ENCODE measurements at regions of chr2 and their contacts with region 1.

Region 1: DNA sequence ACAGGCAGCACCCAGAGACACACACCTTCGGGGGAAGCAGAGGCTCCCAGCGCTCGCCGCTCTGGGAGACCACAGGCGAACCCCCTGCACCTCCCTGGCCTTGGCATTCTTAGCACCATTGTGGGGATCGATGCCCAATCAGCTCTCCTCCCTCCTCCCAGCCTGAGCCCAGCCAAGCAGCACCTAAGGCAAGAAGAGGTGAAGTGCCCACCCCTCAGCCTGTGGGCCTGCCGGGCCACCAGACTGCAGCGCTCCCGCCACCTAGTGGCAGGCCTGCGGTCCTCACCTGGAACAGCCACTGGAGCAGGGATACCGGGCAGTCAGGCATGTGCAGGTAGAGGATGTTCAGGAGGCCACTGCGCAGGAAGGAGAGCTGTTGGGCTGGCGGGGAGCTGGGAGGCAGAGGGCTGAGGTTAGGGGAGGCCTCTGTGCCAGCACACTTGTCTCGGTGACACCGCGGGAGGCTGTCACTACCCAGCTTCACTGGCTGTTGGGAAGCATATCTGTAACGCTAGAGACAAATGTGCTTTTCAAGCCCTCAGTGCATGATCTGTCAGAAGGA is 35.2 kb downstream of the FAM178B start:
- DNase-seq: peak; percentile 91
- ATAC-seq: peak; percentile 96
- H3K4me3 Mint-ChIP-seq: no peak overlapping the region
- H3K27ac Mint-ChIP-seq: no peak overlapping the region
- H3K4me1 Mint-ChIP-seq: peaks cover 11% of the 10 kb centered on the region
- H3K27me3 Mint-ChIP-seq: peaks cover 3% of the 10 kb centered on the region; the same call in 1 of the 2 replicates
- CTCF ChIP-seq: peak; percentile 93

Region 2: DNA sequence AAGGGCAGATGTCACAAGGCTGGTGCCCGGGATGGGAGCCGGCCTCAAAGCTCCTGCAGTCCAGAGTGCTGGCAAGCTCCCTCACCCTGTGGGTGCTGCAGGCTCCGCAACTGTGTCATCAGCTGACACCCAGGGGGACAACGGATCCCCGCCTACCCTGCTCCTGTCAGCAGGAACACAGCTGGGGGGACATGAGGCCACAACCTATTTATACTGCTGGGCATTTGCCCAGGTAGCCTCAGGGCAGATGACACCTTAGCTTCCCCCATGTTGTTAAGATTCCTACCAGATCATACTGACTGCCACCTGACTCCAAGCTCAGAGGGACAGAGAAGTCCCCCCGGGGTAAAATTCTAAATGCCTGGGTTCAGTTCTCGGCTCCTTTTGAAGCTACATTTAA is 108.6 kb before region 1 on chr2:
- CTCF ChIA-PET with region 1: interaction called, 10 read pairs
- POLR2A ChIA-PET with region 1: no interaction called
- DNase-seq: no peak
- ATAC-seq: no peak
- H3K4me3 Mint-ChIP-seq: no peak overlapping the region
- H3K27ac Mint-ChIP-seq: no peak overlapping the region
- H3K4me1 Mint-ChIP-seq: peaks cover 5% of the 10 kb centered on the region; the same call in 1 of the 2 replicates
- H3K27me3 Mint-ChIP-seq: no peaks in the 10 kb centered on the region
- CTCF ChIP-seq: no peak

Region 3: DNA sequence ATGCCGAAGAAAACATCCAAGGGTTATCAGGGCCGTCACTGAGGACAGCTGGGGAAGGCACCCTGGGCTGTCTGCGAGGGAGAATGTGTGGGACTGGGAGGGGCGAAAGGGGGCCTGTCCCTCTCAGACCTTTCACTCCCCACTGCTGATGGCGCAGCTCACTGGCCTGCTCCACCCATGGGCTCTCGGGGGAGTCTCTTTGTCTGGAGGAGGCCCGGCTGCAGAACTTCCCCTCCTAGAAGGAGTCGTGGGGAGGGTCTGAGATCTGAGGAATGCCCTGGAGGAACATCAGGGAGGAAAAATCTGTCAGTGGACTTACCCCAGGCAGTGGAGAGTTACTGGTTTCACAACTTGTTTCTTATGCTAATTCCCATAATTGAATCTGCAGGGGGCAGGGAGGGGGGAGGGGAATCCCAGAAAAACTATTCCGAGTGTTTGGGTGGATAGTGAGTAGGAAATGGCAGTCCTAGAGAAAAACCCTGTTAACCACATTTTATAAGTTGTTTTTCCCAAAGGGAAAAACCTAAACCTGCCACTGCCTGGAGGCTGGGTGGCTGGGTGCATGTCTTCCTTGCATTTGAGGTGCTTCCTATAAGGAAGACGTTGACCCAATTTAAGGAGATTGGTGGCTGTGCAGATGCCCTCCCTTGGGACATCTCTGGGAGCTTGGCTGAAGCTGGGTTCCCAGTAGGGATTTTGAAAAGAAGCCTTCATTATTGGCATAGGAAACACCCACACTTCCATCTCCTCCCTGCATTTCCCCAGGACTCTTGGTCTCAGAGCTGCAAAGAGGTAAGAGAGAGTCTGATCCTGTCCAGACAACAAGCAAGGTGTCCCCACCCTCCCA is 69.6 kb before region 1 on chr2:
- CTCF ChIA-PET with region 1: interaction called, 37 read pairs
- POLR2A ChIA-PET with region 1: no interaction called
- DNase-seq: no peak
- ATAC-seq: peak; percentile 63
- H3K4me3 Mint-ChIP-seq: peak overlapping the region; percentile 47
- H3K27ac Mint-ChIP-seq: peak overlapping the region; percentile 89
- H3K4me1 Mint-ChIP-seq: peaks cover 41% of the 10 kb centered on the region
- H3K27me3 Mint-ChIP-seq: no peaks in the 10 kb centered on the region
- CTCF ChIP-seq: no peak

Region 4: DNA sequence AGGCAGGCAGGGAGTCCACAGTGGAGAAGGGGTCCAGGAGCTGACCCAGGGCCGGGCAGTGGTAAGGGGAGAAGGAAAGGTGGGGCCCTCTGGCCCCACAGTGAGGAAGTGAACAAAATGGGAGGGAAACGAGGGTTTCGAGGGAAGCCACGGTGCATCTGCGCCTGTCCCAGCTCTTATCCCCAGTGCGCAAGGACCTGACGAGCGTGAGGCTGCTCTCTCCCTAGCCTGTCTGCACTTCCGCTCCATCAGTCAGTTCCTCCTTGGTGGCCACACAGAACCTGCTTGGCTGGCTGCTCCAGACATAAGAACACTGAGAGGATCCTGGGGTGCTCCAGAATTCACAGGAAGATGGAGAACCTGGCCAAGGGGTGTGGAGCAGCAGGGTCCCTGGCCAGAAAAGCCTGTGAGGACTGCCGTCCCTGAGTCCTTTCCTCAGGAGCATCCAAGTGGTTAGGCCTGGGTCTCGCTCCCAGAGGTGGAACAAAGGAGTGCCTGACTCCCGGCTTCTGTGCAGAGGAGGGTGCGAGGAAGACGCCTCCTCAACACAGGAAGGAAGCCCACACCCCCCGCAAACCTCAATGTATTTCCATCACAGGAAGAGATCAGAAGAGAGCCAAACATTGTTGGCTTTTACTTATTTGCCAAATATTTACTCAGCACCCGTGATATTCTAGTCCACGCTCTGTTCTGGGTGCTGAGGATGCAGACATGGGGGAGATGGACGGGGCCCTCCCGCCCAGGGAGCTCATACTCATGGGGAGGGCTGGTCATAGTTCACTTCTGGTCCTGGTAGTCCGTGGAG is 37.6 kb before region 1 on chr2:
- CTCF ChIA-PET with region 1: interaction called, 14 read pairs
- POLR2A ChIA-PET with region 1: no interaction called
- DNase-seq: no peak
- ATAC-seq: no peak
- H3K4me3 Mint-ChIP-seq: no peak overlapping the region
- H3K27ac Mint-ChIP-seq: no peak overlapping the region
- H3K4me1 Mint-ChIP-seq: peaks cover 36% of the 10 kb centered on the region
- H3K27me3 Mint-ChIP-seq: peaks cover 40% of the 10 kb centered on the region
- CTCF ChIP-seq: no peak

Region 5: DNA sequence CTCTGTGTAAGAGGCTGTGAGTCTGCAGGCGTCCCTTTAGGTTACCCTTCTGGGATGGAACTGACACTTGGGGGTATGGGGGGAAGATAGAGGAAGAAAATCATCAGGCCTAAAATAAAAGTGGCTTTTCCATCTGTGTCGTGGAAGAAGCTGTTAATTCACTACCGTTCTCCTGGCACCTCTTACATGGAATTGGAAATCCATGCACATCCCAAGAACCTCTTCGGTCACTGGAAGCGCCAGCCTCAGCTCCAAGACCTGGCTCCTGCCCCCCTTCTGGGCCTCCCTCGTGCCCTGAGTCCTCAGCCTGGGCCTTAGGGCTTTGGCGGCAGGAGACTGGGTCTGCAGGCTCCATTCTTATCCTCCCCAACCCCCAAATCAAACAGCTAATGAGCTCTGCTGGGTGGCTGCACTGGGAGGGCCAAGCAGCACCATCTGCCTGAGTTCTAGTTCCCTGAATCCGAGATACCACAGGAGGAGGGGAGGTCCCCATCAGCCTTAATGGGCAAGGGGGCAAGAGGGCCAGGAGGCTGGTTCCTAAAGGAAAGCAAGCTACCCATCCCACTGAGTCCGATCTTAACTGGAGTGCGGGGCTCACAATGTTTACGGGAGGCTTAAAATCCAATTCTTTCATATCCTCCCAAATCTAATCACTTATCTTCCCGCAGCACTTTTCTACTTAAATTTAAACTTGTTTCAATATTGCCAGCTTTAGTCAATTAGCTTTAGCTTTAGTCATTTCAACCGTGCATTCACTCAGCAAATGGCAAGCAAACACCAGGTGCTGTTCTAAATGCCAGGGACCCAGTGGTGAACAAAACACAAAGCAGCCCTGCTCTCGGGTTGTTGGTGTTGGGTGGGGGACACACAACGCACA is 17.6 kb before region 1 on chr2:
- CTCF ChIA-PET with region 1: interaction called, 25 read pairs
- POLR2A ChIA-PET with region 1: interaction called, 3 read pairs
- DNase-seq: no peak
- ATAC-seq: peak; percentile 65
- H3K4me3 Mint-ChIP-seq: no peak overlapping the region
- H3K27ac Mint-ChIP-seq: peak overlapping the region; percentile 15; the same call in 1 of the 2 replicates
- H3K4me1 Mint-ChIP-seq: peaks cover 9% of the 10 kb centered on the region
- H3K27me3 Mint-ChIP-seq: peaks cover 4% of the 10 kb centered on the region
- CTCF ChIP-seq: no peak